PC-9 (cell line): ENCODE measurements at regions of chr10 and their contacts with region 1.

Region 1: DNA sequence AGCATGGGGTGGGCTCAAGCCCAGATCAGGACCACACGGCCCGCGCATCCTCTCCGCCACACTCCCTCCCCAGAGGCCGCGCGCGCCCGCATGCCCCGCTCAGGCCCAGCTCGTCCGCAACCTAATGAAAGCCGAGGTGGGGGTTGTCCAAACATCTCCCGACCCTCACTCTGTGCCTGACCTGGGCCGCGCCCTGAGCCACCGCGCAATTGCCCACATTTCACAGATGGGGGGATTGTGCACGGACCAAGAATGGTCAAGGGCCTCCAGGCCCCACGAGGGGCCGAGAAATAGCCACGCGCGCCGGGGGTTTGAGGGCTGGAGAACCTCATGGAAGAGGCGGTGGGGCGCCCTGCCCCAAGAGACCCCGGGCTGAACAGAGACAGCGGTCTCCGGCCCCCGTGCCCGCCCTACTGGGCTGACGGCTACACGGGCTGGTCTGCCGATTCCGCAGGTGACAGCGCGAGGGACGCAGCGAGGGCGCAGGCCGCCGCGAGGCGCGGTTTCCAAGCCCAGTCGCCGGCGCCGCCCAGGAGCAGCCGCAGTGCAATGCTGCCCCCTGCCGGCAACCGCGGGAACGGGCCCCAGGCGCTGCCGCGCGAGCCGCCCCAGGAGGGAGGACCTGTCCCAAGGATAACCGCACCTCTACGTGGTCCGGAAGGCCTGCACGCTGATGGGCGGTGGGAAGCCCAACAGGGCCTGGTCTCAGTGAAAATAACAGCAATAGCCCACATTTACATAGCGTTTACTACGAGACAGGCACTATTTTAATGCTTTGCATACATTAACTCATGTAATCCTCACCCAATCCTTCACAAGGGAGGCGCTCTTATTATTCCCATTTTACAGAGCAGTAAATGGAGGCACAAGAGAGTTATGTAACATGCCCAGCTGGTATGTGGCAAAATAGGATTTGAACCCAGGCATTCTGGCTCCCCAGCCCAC is 10.5 kb upstream of the GRID1 start:
- DNase-seq: peak in 1 of 2 experiments; percentile 78
- H3K4me3 ChIP-seq: no peak overlapping the region
- H3K27ac ChIP-seq: no peak overlapping the region
- H3K4me1 ChIP-seq: no peaks in the 10 kb centered on the region
- H3K27me3 ChIP-seq: peaks cover 7% of the 10 kb centered on the region; the same call in 1 of the 2 replicates
- CTCF ChIP-seq: peak; percentile 79

Region 2: GRCh38 chr10:86003201-86003621 is 373.9 kb before region 1 on chr10:
- CTCF ChIA-PET with region 1: no interaction called
- POLR2A ChIA-PET with region 1: no interaction called
- intact Hi-C with region 1: no loop called
- DNase-seq: no peak
- H3K4me3 ChIP-seq: no peak overlapping the region
- H3K27ac ChIP-seq: no peak overlapping the region
- H3K4me1 ChIP-seq: no peaks in the 10 kb centered on the region
- H3K27me3 ChIP-seq: no peaks in the 10 kb centered on the region
- CTCF ChIP-seq: no peak

Region 3: GRCh38 chr10:86100581-86101061 is 276.5 kb before region 1 on chr10:
- CTCF ChIA-PET with region 1: no interaction called
- POLR2A ChIA-PET with region 1: no interaction called
- intact Hi-C with region 1: loop called (anchors 5 kb)
- DNase-seq: no peak
- H3K4me3 ChIP-seq: no peak overlapping the region
- H3K27ac ChIP-seq: no peak overlapping the region
- H3K4me1 ChIP-seq: no peaks in the 10 kb centered on the region
- H3K27me3 ChIP-seq: no peaks in the 10 kb centered on the region
- CTCF ChIP-seq: peak; percentile 50

Region 4: GRCh38 chr10:86261941-86262687 is 115.0 kb before region 1 on chr10:
- CTCF ChIA-PET with region 1: no interaction called
- POLR2A ChIA-PET with region 1: no interaction called
- intact Hi-C with region 1: loop called (anchors 1 kb)
- DNase-seq: peak in 1 of 2 experiments; percentile 32
- H3K4me3 ChIP-seq: no peak overlapping the region
- H3K27ac ChIP-seq: no peak overlapping the region
- H3K4me1 ChIP-seq: no peaks in the 10 kb centered on the region
- H3K27me3 ChIP-seq: peaks cover 2% of the 10 kb centered on the region; the same call in 1 of the 2 replicates
- CTCF ChIP-seq: peak; percentile 38; the same call in 1 of the 2 replicates

Region 5: DNA sequence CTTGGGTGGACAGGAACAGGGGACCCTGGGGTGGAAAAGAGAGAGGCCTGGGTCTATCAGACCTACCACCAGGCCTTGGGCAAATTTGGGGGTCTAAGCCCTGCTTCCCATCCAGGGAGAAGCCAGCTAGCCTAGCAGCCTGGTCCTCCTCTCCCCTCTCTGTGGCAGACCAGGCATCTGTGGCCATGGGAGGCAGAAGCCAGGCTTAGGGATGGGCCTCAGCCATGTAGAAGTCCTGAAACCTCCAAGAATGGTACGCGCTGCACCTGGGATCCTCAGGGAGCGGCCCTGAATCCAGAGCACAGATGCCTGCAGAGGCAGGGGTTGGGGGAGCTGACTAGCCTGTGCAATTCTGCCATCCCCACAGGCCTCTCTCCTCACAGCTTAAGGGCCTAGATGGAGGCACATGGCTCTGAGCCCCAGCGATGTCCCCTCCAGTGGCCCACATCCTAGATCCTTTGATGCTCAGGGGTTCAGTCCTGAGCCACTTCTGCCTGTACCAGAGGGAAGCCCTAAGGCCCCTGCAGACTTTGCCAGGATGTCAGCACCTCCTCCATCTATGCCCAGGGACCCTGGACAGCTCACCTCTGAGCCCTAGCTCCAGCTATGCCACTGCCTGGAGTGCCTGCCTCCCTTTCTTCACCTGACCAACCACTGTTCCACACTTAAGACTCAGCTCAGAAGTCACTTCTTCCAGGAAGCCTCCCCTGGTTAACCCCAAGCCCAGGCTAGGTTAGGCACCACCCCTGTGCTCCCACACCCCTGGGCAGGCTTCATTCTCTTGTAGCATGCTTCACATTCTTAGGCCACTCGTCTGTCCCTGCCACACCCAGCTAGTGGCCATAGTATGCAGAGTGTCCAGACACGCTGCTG is 31.6 kb before region 1 on chr10:
- CTCF ChIA-PET with region 1: no interaction called
- POLR2A ChIA-PET with region 1: no interaction called
- intact Hi-C with region 1: no loop called
- DNase-seq: peak; percentile 62 to 81
- H3K4me3 ChIP-seq: no peak overlapping the region
- H3K27ac ChIP-seq: no peak overlapping the region
- H3K4me1 ChIP-seq: peaks cover 12% of the 10 kb centered on the region; the same call in 1 of the 2 replicates
- H3K27me3 ChIP-seq: no peaks in the 10 kb centered on the region
- CTCF ChIP-seq: no peak